Mammary epithelial cell (primary cell): ENCODE measurements at regions of chr1 and their contacts with region 1.

Region 1: DNA sequence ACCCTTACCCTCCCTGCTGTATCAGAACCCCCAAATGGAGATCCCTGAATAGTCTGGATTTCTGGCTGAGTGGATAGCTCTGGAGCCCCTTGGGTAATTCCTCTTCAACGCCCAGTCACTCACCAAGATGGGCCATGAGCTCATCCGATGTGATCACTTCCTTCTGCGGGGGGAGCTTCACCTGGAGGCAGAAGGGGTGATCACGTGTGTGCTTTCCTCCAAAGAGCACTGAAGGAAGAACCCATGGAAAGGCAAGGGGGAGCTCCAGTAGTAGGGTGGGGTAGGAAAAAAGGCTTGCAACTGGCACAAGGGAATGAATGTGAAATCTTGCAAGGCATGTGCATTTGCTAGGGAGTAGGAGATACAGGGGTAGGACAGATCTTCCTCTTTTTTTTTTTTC is 5.1 kb downstream of the MINDY1 start:
- DNase-seq: peak; percentile 28
- H3K4me3 ChIP-seq: no peak overlapping the region
- H3K27ac ChIP-seq: no peak overlapping the region
- H3K4me1 ChIP-seq: peaks cover 18% of the 10 kb centered on the region
- H3K27me3 ChIP-seq: no peaks in the 10 kb centered on the region
- CTCF ChIP-seq: no peak

Region 2: GRCh38 chr1:150967936-150968890 is 33.4 kb before region 1 on chr1:
- CTCF ChIA-PET with region 1: no interaction called
- dilution Hi-C with region 1: loop called (anchors 5 kb)
- in situ Hi-C with region 1: no loop called
- intact Hi-C with region 1: no loop called
- DNase-seq: no peak
- H3K4me3 ChIP-seq: no peak overlapping the region
- H3K27ac ChIP-seq: no peak overlapping the region
- H3K4me1 ChIP-seq: peaks cover 22% of the 10 kb centered on the region
- H3K27me3 ChIP-seq: no peaks in the 10 kb centered on the region
- CTCF ChIP-seq: no peak